GM10248 (cell line): ENCODE measurements at regions of chr10 and their contacts with region 1.

Region 1: GRCh38 chr10:132540456-132540855 is 2.9 kb downstream of the INPP5A start:
- DNase-seq: no peak
- CTCF ChIP-seq: no peak

Region 2: DNA sequence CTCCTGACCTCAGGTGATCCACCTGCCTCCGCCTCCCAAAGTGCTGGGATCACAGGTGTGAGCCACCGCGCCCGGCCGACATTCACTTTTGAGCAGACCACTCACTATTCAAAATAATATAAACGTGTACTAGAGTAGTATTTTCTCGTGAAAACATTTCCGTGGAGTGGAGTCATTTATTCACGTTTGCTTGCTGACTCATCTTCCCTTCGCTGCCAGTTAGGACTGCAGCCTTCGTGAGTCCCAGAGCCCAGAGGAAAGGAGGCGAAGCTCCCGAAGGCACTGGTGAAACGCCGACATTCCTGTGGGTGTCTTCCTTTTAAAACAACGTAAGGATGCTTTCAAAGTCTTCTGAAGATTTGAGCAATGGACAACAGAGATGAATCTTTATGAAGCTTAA is 13.8 kb before region 1 on chr10:
- CTCF ChIA-PET with region 1: no interaction called
- POLR2A ChIA-PET with region 1: no interaction called
- DNase-seq: no peak
- CTCF ChIP-seq: no peak

Region 3: DNA sequence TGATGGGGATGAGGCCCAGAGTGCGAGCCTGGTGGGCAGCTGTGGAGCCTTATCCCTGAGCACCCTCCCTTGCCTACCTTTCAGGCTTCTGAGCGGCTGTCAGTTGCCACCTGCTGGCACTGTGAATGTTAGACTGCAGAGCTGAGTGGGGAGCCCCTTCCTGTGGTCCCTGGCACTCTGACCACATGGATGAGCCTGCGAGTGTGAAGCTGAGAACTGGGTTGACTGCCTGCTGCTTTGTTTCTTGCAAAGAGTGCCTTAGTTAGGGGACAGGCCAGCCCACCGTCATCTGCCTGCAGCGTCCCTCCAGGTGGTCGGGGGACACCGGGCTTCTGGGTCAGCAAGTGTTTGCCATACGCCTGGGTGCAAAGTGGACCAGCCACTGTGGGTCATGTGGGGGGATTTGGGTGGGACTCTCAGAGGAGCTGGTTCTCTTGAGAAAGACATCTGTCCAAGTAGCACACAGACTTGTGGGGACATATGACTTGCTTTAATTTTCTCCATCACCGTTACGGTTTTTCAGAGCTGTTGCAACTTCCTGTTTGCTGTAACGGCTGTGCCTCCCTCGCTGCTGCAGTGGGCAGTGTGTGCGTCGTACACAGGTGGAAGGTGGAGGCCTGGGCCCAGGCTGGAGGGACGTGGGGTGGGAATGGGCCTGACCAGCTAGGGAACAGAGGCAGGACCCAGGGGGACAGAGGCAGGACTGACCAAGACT is 10.8 kb after region 1 on chr10:
- CTCF ChIA-PET with region 1: interaction called, 18 read pairs
- POLR2A ChIA-PET with region 1: interaction called, 3 read pairs
- DNase-seq: peak; percentile 69
- CTCF ChIP-seq: peak; percentile 25

Region 4: DNA sequence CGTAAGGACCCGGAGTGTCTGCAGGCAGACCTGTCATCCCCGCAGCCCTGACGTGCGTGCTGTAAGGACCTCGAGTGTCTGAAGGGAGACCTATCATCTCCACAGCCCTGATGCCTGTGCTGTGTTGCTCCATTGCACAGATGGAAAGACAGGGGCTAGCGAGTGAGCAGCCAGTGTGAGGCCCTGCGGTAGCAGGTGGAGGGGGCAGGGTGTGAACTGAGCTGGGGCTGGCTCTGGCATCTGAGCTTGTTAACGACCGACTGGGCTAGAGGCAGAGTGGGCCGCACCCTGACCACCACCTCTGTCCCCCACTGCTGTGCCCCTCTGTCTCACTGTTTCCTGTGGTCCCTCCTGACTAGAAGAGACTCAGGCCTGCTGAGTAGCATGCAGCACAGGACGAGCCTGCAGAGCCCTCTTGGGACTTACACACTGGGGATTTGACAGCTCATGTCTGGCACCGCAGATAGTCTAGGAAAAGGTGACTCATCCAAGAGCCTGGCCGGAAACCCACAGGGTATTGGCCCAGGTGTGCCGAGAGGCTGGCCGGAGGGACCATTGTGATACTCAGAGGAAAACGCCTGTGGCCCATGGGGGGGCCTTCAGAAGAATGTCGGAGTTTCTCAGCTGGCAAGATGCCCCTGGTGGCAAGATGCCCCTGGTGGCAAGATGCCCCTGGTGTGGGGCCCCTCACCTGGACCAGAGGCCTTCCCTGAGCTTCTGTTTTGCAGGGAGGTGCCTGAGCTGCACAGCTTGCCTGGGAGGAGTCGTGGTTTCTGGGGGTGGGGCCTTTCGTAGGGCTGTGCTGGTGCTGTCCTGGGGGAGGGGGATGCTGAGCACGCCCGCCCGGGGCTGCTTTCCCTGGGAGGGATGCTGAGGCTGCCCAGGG is 31.4 kb after region 1 on chr10:
- CTCF ChIA-PET with region 1: interaction called, 13 read pairs
- POLR2A ChIA-PET with region 1: interaction called, 4 read pairs
- DNase-seq: peak; percentile 86
- CTCF ChIP-seq: no peak